CD8-positive, alpha-beta T cell (primary cell): ENCODE measurements at regions of chr1 and their contacts with region 1.

Region 1: GRCh38 chr1:168439456-168440375 is 104.1 kb downstream of the XCL2 start:
- DNase-seq: peak; percentile 69 to 92 (median 84)
- ATAC-seq: peak; percentile 88
- H3K4me3 ChIP-seq: peak overlapping the region; percentile 21 to 29
- H3K4me3 Mint-ChIP-seq: peak overlapping the region; percentile 83
- H3K27ac ChIP-seq: peak overlapping the region in 1 of 2 experiments; percentile 53
- H3K27ac Mint-ChIP-seq: peak overlapping the region; percentile 90
- H3K4me1 ChIP-seq: peaks cover 46% of the 10 kb centered on the region
- H3K4me1 Mint-ChIP-seq: peaks cover 58% of the 10 kb centered on the region
- H3K27me3 ChIP-seq: no peaks in the 10 kb centered on the region
- H3K27me3 Mint-ChIP-seq: no peaks in the 10 kb centered on the region
- CTCF ChIP-seq: peak; percentile 70

Region 2: GRCh38 chr1:168421399-168422004 is 18.2 kb before region 1 on chr1:
- CTCF ChIA-PET with region 1: interaction called, 25 read pairs
- POLR2A ChIA-PET with region 1: interaction called, 4 read pairs
- intact Hi-C with region 1: no loop called
- DNase-seq: peak in 4 of 9 experiments; percentile 25 to 79 (median 51)
- ATAC-seq: peak; percentile 87
- H3K4me3 ChIP-seq: no peak overlapping the region
- H3K4me3 Mint-ChIP-seq: peak overlapping the region; percentile 10
- H3K27ac ChIP-seq: peak overlapping the region in 1 of 2 experiments; percentile 63
- H3K27ac Mint-ChIP-seq: peak overlapping the region; percentile 75
- H3K4me1 ChIP-seq: peaks cover 14% of the 10 kb centered on the region
- H3K4me1 Mint-ChIP-seq: peaks cover 34% of the 10 kb centered on the region
- H3K27me3 ChIP-seq: no peaks in the 10 kb centered on the region
- H3K27me3 Mint-ChIP-seq: no peaks in the 10 kb centered on the region
- CTCF ChIP-seq: no peak

Region 3: DNA sequence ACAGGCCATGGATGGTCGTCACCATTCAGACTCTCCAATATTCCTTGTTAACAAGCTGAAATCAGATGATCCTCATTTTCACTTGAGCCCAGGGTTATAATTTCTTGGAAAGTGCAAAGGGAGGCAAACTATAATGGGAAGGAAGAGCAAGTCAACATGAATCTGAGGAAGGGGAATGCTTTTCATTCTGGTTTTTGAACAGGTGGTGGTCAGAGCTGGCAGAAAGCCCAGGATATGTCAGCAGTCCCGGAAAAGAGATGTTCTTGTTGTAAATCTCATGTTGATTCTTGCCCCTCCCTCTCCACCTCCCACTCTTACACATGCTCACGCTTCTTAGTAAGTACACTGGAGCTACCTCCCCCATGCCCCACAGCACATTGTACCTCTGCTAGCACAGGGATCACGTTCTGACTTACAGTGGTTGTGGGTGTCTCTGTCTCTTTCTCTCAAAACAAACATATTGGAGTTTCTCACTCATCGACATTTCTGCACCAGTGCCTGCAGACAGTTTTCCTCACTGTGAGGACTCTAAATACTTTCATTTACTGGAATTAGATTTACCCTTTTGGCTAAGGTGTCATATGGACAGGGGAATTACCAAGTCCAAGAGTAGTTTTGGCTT is 26.5 kb after region 1 on chr1:
- CTCF ChIA-PET with region 1: interaction called, 12 read pairs
- POLR2A ChIA-PET with region 1: no interaction called
- intact Hi-C with region 1: loop called in 1 of 2 experiments (anchors 2 kb)
- DNase-seq: peak in 6 of 9 experiments; percentile 20 to 66 (median 47)
- ATAC-seq: peak; percentile 79
- H3K4me3 ChIP-seq: no peak overlapping the region
- H3K4me3 Mint-ChIP-seq: peak overlapping the region; percentile 38
- H3K27ac ChIP-seq: peak overlapping the region in 1 of 2 experiments; percentile 70
- H3K27ac Mint-ChIP-seq: peak overlapping the region; percentile 90
- H3K4me1 ChIP-seq: peaks cover 54% of the 10 kb centered on the region
- H3K4me1 Mint-ChIP-seq: peaks cover 64% of the 10 kb centered on the region
- H3K27me3 ChIP-seq: no peaks in the 10 kb centered on the region
- H3K27me3 Mint-ChIP-seq: no peaks in the 10 kb centered on the region
- CTCF ChIP-seq: no peak

Region 4: DNA sequence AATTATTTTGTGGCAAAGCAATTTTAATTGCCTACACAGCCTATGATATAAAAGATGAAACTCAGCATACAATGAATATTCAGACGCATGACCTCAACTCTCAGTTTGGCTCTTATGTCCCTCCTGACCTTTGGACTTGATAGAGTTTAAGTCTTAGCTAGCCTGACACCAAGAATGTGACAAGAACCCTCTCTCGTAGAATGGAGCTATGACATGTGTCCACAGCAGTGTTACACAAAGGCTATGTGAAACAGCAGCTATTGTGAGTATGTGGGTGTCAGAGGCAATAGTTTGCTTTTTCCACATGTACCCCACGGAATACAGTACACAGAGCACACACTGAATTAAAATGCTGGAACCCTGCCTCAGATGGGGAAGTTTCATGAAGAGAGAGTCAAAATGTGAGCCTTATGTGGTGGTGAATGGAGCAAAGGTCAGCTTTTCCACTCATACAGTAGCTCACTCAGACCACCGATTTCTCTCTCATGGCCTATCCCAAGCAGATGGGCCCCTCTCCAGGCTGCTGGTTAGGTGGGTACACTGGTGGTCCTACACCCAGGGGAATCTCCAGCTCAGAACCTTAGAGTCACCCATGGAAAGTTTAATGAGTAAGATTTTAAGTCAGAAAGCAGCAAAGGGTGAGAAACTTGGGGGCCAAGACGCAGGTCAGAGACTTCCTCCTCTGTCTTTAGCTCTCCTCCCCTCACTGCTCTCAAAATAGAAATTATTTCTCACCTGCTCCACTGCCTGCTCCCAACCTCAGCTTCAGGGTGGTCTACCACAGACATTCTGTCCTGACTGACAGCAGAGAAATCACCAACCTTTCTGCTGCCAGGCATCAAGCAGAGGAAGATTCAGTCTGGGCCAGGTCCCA is 114.2 kb after region 1 on chr1:
- CTCF ChIA-PET with region 1: interaction called, 17 read pairs
- POLR2A ChIA-PET with region 1: no interaction called
- intact Hi-C with region 1: no loop called
- DNase-seq: peak in 2 of 9 experiments; percentile 23 to 44
- ATAC-seq: peak; percentile 23
- H3K4me3 ChIP-seq: no peak overlapping the region
- H3K4me3 Mint-ChIP-seq: peak overlapping the region; percentile 3
- H3K27ac ChIP-seq: peak overlapping the region in 1 of 2 experiments; percentile 34
- H3K27ac Mint-ChIP-seq: peak overlapping the region; percentile 66
- H3K4me1 ChIP-seq: peaks cover 31% of the 10 kb centered on the region
- H3K4me1 Mint-ChIP-seq: peaks cover 61% of the 10 kb centered on the region
- H3K27me3 ChIP-seq: no peaks in the 10 kb centered on the region
- H3K27me3 Mint-ChIP-seq: no peaks in the 10 kb centered on the region
- CTCF ChIP-seq: no peak

Region 5: DNA sequence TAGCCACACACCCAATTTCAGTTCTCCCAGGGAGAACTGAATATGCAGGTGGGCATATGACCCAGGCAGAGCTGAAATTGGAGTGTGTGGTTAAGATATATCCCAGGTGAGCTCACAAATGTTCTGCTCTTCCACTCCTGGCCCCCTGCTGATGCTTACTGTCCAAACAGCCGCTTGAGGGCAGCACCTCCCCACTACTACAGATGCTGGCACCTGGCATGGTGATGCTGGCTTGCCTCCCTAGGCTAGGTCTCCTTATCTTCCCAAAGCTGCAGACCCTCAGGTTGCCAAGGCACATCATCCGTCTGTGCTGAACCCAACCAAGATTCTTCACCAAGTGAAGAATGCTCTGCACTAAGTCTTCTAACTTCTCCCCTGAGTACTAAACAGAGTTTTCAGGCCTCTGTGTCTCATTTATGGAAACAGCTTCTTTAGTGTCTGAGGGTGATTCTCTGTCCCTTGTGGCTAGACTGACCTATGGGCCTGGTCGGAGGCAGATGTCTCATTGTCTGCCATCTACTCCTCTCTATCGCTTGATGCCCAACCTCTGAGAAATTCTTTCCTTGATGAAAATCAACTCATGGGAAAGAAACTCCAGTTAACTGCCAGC is 163.9 kb after region 1 on chr1:
- CTCF ChIA-PET with region 1: interaction called, 77 read pairs
- POLR2A ChIA-PET with region 1: interaction called, 3 read pairs
- intact Hi-C with region 1: loop called in 1 of 2 experiments (anchors 1 kb)
- DNase-seq: peak; percentile 38 to 78 (median 68)
- ATAC-seq: peak; percentile 67
- H3K4me3 ChIP-seq: no peak overlapping the region
- H3K4me3 Mint-ChIP-seq: no peak overlapping the region
- H3K27ac ChIP-seq: no peak overlapping the region
- H3K27ac Mint-ChIP-seq: no peak overlapping the region
- H3K4me1 ChIP-seq: no peaks in the 10 kb centered on the region
- H3K4me1 Mint-ChIP-seq: no peaks in the 10 kb centered on the region
- H3K27me3 ChIP-seq: no peaks in the 10 kb centered on the region
- H3K27me3 Mint-ChIP-seq: no peaks in the 10 kb centered on the region
- CTCF ChIP-seq: peak; percentile 63

Region 6: GRCh38 chr1:168637350-168637991 is 197.8 kb after region 1 on chr1:
- CTCF ChIA-PET with region 1: no interaction called
- POLR2A ChIA-PET with region 1: no interaction called
- intact Hi-C with region 1: no loop called
- DNase-seq: peak in 2 of 9 experiments; percentile 10 to 28
- ATAC-seq: no peak
- H3K4me3 ChIP-seq: no peak overlapping the region
- H3K4me3 Mint-ChIP-seq: no peak overlapping the region
- H3K27ac ChIP-seq: no peak overlapping the region
- H3K27ac Mint-ChIP-seq: no peak overlapping the region
- H3K4me1 ChIP-seq: no peaks in the 10 kb centered on the region
- H3K4me1 Mint-ChIP-seq: no peaks in the 10 kb centered on the region
- H3K27me3 ChIP-seq: no peaks in the 10 kb centered on the region
- H3K27me3 Mint-ChIP-seq: no peaks in the 10 kb centered on the region
- CTCF ChIP-seq: peak; percentile 28

Region 7: DNA sequence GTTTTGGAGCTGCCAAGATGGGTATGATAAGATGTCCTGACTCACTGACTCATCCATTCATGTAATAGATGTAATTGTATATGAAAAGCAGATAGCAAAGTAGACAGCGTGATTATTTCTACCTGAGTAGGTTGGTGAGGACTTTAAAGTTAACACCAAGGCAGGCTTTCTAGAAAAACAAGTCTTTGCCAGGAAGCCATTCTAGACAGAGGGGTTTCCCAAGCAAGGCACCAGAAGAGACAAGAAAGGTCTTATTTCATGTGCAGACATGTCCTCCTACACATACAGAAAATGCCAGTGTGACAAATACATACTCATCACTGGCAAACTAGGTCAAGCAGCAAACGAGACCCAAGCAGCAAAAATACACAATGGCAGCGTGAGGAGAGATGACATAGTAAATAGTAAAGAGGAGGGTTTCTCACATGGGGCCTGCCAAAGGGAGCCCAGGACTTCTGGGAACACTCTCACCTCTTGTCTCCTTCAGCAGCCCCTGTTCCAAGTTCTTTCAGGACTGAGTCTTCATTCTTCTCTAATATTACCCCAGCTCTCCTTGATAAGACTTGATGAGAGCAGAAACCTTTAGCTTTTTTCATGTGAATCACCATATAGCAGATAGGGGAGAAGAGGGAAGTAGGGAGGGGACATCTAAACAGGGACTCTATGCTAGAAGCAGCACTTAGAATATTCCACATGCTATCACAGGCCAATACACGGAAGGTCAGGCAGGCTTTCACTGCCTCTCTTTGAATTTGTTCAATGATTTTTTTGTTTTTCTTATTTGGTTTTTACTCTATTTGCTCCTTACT is 552.2 kb after region 1 on chr1:
- CTCF ChIA-PET with region 1: no interaction called
- POLR2A ChIA-PET with region 1: no interaction called
- intact Hi-C with region 1: no loop called
- DNase-seq: peak in 1 of 9 experiments; percentile 5
- ATAC-seq: no peak
- H3K4me3 ChIP-seq: no peak overlapping the region
- H3K4me3 Mint-ChIP-seq: no peak overlapping the region
- H3K27ac ChIP-seq: no peak overlapping the region
- H3K27ac Mint-ChIP-seq: no peak overlapping the region
- H3K4me1 ChIP-seq: no peaks in the 10 kb centered on the region
- H3K4me1 Mint-ChIP-seq: no peaks in the 10 kb centered on the region
- H3K27me3 ChIP-seq: no peaks in the 10 kb centered on the region
- H3K27me3 Mint-ChIP-seq: peaks cover 3% of the 10 kb centered on the region
- CTCF ChIP-seq: no peak

Region 8: GRCh38 chr1:169133801-169134502 is 694.2 kb after region 1 on chr1:
- CTCF ChIA-PET with region 1: no interaction called
- POLR2A ChIA-PET with region 1: no interaction called
- intact Hi-C with region 1: no loop called
- DNase-seq: peak in 1 of 9 experiments; percentile 13
- ATAC-seq: no peak
- H3K4me3 ChIP-seq: no peak overlapping the region
- H3K4me3 Mint-ChIP-seq: no peak overlapping the region
- H3K27ac ChIP-seq: no peak overlapping the region
- H3K27ac Mint-ChIP-seq: peak overlapping the region; percentile 34
- H3K4me1 ChIP-seq: no peaks in the 10 kb centered on the region
- H3K4me1 Mint-ChIP-seq: no peaks in the 10 kb centered on the region
- H3K27me3 ChIP-seq: no peaks in the 10 kb centered on the region
- H3K27me3 Mint-ChIP-seq: no peaks in the 10 kb centered on the region
- CTCF ChIP-seq: no peak

Region 9: GRCh38 chr1:169348383-169349036 is 908.8 kb after region 1 on chr1:
- CTCF ChIA-PET with region 1: interaction called, 28 read pairs
- POLR2A ChIA-PET with region 1: interaction called, 6 read pairs
- intact Hi-C with region 1: loop called (anchors 1 to 2 kb)
- DNase-seq: peak in 4 of 9 experiments; percentile 20 to 77 (median 44)
- ATAC-seq: peak; percentile 49
- H3K4me3 ChIP-seq: no peak overlapping the region
- H3K4me3 Mint-ChIP-seq: no peak overlapping the region
- H3K27ac ChIP-seq: no peak overlapping the region
- H3K27ac Mint-ChIP-seq: no peak overlapping the region
- H3K4me1 ChIP-seq: no peaks in the 10 kb centered on the region
- H3K4me1 Mint-ChIP-seq: peaks cover 8% of the 10 kb centered on the region
- H3K27me3 ChIP-seq: no peaks in the 10 kb centered on the region
- H3K27me3 Mint-ChIP-seq: no peaks in the 10 kb centered on the region
- CTCF ChIP-seq: peak; percentile 99